ENCODE measurements at regions of chr5 and their contacts with region 1.

Region 1: GRCh38 chr5:73201547-73202513 is 28.8 kb downstream of the TMEM174 start:
- DNase-seq: peak; percentile 53 to 74
- ATAC-seq: peak; percentile 79 to 96 (median 90)
- H3K4me3 ChIP-seq: no peak overlapping the region
- H3K4me3 Mint-ChIP-seq: no peak overlapping the region
- H3K27ac ChIP-seq: no peak overlapping the region
- H3K27ac Mint-ChIP-seq: no peak overlapping the region
- H3K4me1 ChIP-seq: peaks cover 6% of the 10 kb centered on the region
- H3K4me1 Mint-ChIP-seq: peaks cover 0 to 6% of the 10 kb centered on the region in 2 donors
- H3K27me3 ChIP-seq: peaks cover 3% of the 10 kb centered on the region
- H3K27me3 Mint-ChIP-seq: peaks cover 27 to 36% of the 10 kb centered on the region in 2 donors
- CTCF ChIP-seq: peak; percentile 85

Region 2: GRCh38 chr5:72955768-72956323 is 246.0 kb before region 1 on chr5 and contains the start of gene FCHO2:
- intact Hi-C with region 1: loop called (anchors 5 kb)
- DNase-seq: peak; percentile 98
- ATAC-seq: peak; percentile 96 to 99 (median 97)
- H3K4me3 ChIP-seq: peak within 1 kb of the TSS; percentile 51
- H3K4me3 Mint-ChIP-seq: peak within 1 kb of the TSS; percentile 95
- H3K27ac ChIP-seq: peak within 1 kb of the TSS; percentile 23
- H3K27ac Mint-ChIP-seq: peak within 1 kb of the TSS; percentile 82 to 98
- H3K4me1 ChIP-seq: peaks cover 10% of the 10 kb centered on the region
- H3K4me1 Mint-ChIP-seq: peaks cover 27 to 33% of the 10 kb centered on the region in 2 donors
- H3K27me3 ChIP-seq: peaks cover 11% of the 10 kb centered on the region
- H3K27me3 Mint-ChIP-seq: peaks cover 0 to 6% of the 10 kb centered on the region in 2 donors
- CTCF ChIP-seq: peak; percentile 70
- total RNA-seq, gene FCHO2: 18.5 to 23.4 (median 22.7) TPM

Region 3: DNA sequence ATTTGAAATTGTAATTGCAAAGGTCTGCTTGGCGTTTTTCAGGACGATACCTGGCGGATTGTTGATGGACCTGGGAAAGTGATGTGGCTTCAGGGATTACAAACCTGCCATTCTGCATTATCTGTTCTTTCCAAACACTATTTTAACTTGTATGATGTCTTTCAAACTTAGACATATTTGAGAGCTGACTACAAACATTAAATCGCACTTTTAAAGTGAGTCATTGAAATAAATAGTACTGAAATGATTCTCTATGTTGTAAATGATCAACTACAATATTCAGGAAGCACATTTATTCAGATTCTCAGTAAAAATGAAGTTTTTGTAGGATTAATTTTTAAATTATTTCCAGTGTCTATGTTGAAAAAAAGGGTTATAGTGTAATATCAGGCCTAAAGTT is 113.8 kb before region 1 on chr5:
- intact Hi-C with region 1: loop called (anchors 2 kb)
- DNase-seq: no peak
- ATAC-seq: no peak
- H3K4me3 ChIP-seq: no peak overlapping the region
- H3K4me3 Mint-ChIP-seq: no peak overlapping the region
- H3K27ac ChIP-seq: no peak overlapping the region
- H3K27ac Mint-ChIP-seq: no peak overlapping the region
- H3K4me1 ChIP-seq: no peaks in the 10 kb centered on the region
- H3K4me1 Mint-ChIP-seq: no peaks in the 10 kb centered on the region
- H3K27me3 ChIP-seq: no peaks in the 10 kb centered on the region
- H3K27me3 Mint-ChIP-seq: no peaks in the 10 kb centered on the region
- CTCF ChIP-seq: no peak

Measured in natural killer cell (primary cell).